ENCODE measurements at regions of chr20 and their contacts with region 1.

Region 1: DNA sequence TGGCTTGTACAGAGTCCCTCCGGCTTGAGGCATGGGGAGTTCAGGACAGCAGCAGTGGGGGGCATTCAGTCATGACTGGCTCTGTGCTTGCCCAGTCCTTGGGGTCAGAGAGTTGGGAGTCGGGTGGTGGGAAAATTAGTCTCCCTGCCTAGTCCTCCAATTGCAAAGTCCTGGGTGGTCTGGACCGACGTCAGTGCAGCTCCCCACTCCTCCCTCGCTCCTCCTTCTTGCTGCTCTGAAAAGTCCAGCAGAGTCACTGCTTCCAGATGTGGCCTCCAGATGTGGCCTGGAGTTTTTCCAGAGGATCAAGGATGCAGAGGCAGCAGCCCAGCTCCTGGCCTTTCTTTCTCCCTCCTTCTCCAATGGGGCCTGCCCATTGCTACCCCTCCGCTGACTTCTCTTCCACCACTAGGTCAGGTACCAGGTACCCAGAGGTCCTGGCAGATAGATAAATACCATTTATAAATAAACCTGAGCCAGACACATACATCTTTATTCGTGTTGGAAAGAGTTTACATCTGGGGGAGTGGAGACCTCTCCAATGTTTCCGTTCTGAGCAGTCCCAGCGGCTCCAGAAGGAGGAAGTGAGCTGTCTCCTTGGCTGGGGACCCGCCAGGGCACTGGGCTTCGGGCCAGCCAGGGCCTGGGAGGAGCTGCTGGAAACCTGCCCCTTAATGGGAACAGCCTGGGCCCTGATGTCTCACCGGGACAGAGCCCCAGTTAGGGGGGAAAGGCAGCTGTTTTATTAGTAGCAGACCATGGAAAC is 49.0 kb upstream of the RNF24 start:
- DNase-seq: peak; percentile 94
- ATAC-seq: peak; percentile 90 to 96 (median 93)
- H3K4me3 ChIP-seq: peak overlapping the region in 1 of 10 donors; percentile 12
- H3K27ac ChIP-seq: peak overlapping the region; percentile 64 to 91 (median 83)
- H3K4me1 ChIP-seq: peaks cover 13 to 95% (median 58%) of the 10 kb centered on the region in 9 donors
- H3K27me3 ChIP-seq: no peaks in the 10 kb centered on the region
- CTCF ChIP-seq: peak in 3 of 9 donors; percentile 18 to 38 (median 19)

Region 2: DNA sequence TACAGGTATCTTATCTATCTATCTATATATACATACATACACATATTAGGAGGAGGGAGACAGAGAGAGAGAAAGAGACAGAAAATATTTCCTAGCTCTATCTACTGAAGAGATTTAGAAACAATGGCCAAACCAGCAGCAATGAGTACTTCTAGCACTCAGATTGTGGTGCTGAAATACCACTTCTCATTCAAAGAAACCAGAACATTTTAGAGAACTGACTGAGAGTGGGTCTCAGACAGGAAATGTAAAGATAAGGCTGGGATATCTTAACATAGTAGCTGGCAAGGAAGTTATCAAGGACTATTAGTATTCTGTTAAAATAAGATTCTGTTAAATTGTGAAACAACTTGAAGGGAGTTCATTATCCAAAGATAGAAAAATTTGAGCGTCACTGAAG is 713.9 kb before region 1 on chr20:
- intact Hi-C with region 1: no loop called
- DNase-seq: no peak
- ATAC-seq: no peak
- H3K4me3 ChIP-seq: no peak overlapping the region
- H3K27ac ChIP-seq: no peak overlapping the region
- H3K4me1 ChIP-seq: peaks cover 0 to 39% (median 8%) of the 10 kb centered on the region in 9 donors
- H3K27me3 ChIP-seq: no peaks in the 10 kb centered on the region
- CTCF ChIP-seq: no peak

Region 3: DNA sequence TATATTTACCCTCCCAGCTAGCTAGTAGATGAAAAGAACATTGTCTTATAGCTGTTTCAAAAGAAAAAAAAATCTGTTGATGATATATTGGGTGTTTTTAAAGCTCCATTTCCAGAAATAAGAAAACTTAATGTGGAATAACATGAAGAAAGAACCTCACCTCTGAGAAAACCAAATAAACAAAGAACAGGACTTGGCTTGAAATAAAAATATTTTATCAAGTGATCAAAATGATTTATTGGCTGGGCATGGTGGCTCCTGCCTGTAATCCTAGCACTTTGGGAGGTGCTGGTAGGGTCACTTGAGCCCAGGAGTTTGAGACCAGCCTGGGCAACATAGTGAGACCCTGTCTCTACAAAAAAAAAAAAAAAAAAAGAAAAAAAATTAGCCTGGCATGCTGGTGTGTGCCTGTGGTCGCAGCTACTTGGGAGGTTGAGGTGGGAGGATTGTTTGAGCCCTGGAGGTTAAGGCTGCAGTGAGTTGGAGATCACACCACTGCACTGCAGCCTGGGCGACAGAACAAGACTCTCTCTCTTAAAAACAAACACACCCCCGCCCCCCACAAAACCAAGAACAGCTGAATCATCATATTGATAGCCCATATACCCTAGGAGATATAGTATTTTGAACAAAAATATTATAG is 56.8 kb before region 1 on chr20:
- intact Hi-C with region 1: no loop called
- DNase-seq: no peak
- ATAC-seq: no peak
- H3K4me3 ChIP-seq: no peak overlapping the region
- H3K27ac ChIP-seq: peak overlapping the region in 7 of 10 donors; percentile 2 to 59 (median 32)
- H3K4me1 ChIP-seq: peaks cover 7 to 59% (median 22%) of the 10 kb centered on the region in 9 donors
- H3K27me3 ChIP-seq: no peaks in the 10 kb centered on the region
- CTCF ChIP-seq: no peak

Region 4: GRCh38 chr20:4022386-4023286 is 41.7 kb before region 1 on chr20:
- intact Hi-C with region 1: loop called in 3 of 10 experiments (anchors 5 kb)
- DNase-seq: no peak
- ATAC-seq: peak in 1 of 8 donors; percentile 21
- H3K4me3 ChIP-seq: no peak overlapping the region
- H3K27ac ChIP-seq: peak overlapping the region in 3 of 10 donors; percentile 20 to 56 (median 39)
- H3K4me1 ChIP-seq: peaks cover 0 to 31% (median 15%) of the 10 kb centered on the region in 9 donors
- H3K27me3 ChIP-seq: no peaks in the 10 kb centered on the region
- CTCF ChIP-seq: no peak

Region 5: DNA sequence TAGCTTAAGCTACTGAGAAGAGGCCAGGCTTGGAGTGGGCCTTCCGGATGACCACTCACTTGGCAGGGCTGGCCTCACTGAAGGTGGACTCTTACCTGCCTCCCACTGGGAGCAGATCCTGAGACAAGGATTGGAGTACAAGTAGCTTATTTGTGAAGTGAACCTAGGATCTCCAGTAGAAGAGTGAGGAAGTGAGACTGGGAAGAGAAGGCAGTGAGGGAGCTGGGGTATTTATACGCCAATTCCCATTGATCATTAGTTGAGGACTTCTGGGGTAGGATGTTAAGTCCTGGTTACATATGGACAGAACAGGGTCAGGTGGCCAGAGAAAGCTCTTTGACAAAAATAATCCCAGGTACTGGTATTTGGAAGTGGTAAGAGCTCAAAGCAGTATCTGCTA is 16.7 kb before region 1 on chr20:
- intact Hi-C with region 1: loop called in 1 of 10 experiments (anchors 2 kb)
- DNase-seq: no peak
- ATAC-seq: no peak
- H3K4me3 ChIP-seq: no peak overlapping the region
- H3K27ac ChIP-seq: no peak overlapping the region
- H3K4me1 ChIP-seq: peaks cover 0 to 25% (median 12%) of the 10 kb centered on the region in 9 donors
- H3K27me3 ChIP-seq: no peaks in the 10 kb centered on the region
- CTCF ChIP-seq: no peak

Region 6: DNA sequence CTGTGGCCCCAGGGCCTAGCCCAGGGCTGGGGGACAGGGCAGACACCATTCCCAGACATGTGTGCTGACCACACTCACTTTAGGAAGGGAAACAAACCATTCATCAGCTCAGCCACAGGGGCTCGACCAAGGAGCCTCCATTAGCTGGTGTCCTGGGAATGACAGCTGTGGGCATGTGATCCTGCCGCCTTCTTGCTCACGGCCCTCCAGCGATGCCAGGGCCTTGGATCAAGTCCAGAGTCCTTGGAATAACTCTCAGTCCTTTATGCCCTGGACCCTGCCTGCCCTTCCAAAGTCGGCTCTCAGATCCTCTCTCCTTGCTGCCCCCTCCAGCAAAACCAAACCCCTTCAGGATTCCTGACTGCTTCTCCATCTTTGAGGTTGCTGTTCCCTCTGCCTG is 116.0 kb after region 1 on chr20:
- intact Hi-C with region 1: no loop called
- DNase-seq: no peak
- ATAC-seq: peak in 5 of 8 donors; percentile 33 to 54 (median 46)
- H3K4me3 ChIP-seq: no peak overlapping the region
- H3K27ac ChIP-seq: no peak overlapping the region
- H3K4me1 ChIP-seq: no peaks in the 10 kb centered on the region
- H3K27me3 ChIP-seq: no peaks in the 10 kb centered on the region
- CTCF ChIP-seq: no peak

Measured in heart right ventricle (tissue), 16 donors.